ENCODE measurements at regions of chr3 and their contacts with region 1.

Region 1: GRCh38 chr3:170869645-170870593 is at the start of gene RPL22L1:
- DNase-seq: peak; percentile 79 to 99 (median 85)
- ATAC-seq: peak; percentile 90
- H3K4me3 ChIP-seq: peak within 1 kb of the TSS; percentile 66
- H3K27ac ChIP-seq: peak within 1 kb of the TSS; percentile 96
- H3K4me1 ChIP-seq: peaks cover 3 to 14% of the 10 kb centered on the region in 2 experiments; a peak in 3 of 5 replicates
- H3K27me3 ChIP-seq: no peaks in the 10 kb centered on the region
- CTCF ChIP-seq: peak in 2 of 3 experiments; percentile 26 to 31; a peak in 1 of 6 replicates
- EP300 ChIP-seq: peak; percentile 4; the same call in 1 of the 2 replicates
- POLR2A ChIP-seq: peak; percentile 100
- RAD21 ChIP-seq: peak; percentile 6 to 11; a peak in 1 of 4 replicates
- polyA plus RNA-seq, gene RPL22L1: 108 to 111 TPM

Region 2: DNA sequence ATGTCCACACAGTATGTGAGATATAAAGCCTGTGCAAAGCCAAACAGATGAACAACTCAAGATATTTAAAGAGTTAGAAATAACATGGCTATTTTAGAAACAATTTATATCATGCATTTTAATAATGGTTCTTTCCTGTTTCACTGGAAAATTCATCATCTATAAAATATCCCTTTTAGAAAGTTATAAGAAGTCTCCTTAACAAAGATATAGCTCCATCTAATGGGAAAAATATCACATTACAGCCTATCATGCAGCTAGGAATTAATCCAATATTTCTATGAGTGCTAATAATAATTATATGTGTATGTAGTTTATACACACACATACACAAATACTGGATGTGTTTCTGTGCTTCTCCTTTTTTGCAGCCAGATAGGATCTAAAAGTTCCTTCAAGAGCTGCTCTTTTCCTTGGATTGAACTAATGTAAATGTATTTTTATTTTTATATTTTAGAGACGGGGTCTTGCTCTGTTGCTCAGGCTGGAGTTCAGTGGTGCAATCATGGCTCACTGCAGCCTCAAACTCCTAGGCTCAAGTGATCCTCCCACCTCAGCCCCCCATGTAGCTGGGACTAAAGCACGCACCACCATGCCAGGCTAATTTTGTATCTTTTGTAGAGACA is 21.5 kb before region 1 on chr3:
- CTCF ChIA-PET with region 1: no interaction called
- POLR2A ChIA-PET with region 1: interaction called, 43 read pairs
- in situ Hi-C with region 1: no loop called
- intact Hi-C with region 1: no loop called
- DNase-seq: peak in 1 of 4 experiments; percentile 19
- ATAC-seq: 0 out of 3 replicates have a peak, but pooled peaks have one; percentile 42
- H3K4me3 ChIP-seq: no peak overlapping the region
- H3K27ac ChIP-seq: no peak overlapping the region
- H3K4me1 ChIP-seq: no peaks in the 10 kb centered on the region
- H3K27me3 ChIP-seq: no peaks in the 10 kb centered on the region; a peak in 1 of 5 replicates
- CTCF ChIP-seq: peak in 1 of 3 experiments; percentile 68; a peak in 4 of 6 replicates
- EP300 ChIP-seq: no peak
- POLR2A ChIP-seq: no peak
- RAD21 ChIP-seq: peak; percentile 77 to 83

Region 3: GRCh38 chr3:170889132-170889531 is 19.2 kb after region 1 on chr3:
- CTCF ChIA-PET with region 1: no interaction called
- POLR2A ChIA-PET with region 1: interaction called, 17 read pairs
- in situ Hi-C with region 1: no loop called
- intact Hi-C with region 1: no loop called
- DNase-seq: no peak
- ATAC-seq: no peak
- H3K4me3 ChIP-seq: no peak overlapping the region
- H3K27ac ChIP-seq: no peak overlapping the region
- H3K4me1 ChIP-seq: no peaks in the 10 kb centered on the region
- H3K27me3 ChIP-seq: no peaks in the 10 kb centered on the region
- CTCF ChIP-seq: no peak
- EP300 ChIP-seq: no peak
- POLR2A ChIP-seq: no peak
- RAD21 ChIP-seq: no peak

Region 4: DNA sequence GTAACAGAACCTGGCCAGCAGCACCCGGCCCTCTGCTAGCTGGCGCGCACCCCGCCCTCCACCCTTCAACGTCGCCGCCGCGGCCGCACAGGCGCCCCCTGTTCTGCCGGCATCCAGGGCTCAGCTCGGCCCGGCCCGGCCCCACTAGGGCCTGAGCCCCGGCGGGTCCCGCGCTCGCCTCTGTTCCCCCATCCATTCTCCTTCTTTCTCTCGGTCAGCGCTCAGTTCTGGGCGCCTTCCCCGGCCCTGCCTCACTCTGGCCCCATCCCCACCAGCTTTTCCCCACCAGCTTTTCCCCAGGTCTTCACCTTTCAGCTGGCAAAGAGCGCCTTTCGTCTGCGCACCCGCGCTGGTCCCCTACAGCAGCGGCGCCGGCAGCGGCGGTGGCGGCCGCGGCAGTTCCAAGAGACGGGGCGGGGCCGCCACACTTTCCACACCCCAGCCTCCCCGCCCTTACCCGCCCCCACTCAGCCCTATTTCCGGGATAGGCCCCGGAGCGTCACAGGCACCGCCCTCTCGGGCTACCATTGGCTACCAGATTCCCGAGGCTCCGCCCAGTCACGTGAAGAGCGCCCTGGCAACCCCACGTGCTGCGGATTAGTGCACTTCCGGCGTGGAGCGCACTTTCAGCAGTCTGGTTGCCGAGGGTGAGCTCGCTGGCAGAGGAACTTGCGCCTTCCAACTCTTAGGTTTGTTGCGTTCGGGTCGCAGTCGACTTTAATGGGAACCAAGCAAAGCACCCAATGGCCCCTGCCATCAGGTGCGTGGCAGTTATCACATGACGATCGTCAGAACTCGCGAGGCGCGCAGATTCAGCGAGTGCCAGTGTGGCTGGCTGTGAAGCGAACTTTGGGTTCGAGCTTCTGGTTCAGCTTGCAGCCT is 38.6 kb after region 1 on chr3 and contains the start of gene EIF5A2:
- CTCF ChIA-PET with region 1: no interaction called
- POLR2A ChIA-PET with region 1: interaction called, 7 read pairs
- in situ Hi-C with region 1: no loop called
- intact Hi-C with region 1: loop called (anchors 1 kb)
- DNase-seq: peak; percentile 97 to 99 (median 99)
- ATAC-seq: peak; percentile 97
- H3K4me3 ChIP-seq: peak within 1 kb of the TSS; percentile 77
- H3K27ac ChIP-seq: peak within 1 kb of the TSS; percentile 84
- H3K4me1 ChIP-seq: peaks cover 2 to 14% of the 10 kb centered on the region in 2 experiments; a peak in 3 of 5 replicates
- H3K27me3 ChIP-seq: no peaks in the 10 kb centered on the region
- CTCF ChIP-seq: no peak
- EP300 ChIP-seq: no peak
- POLR2A ChIP-seq: peak; percentile 85
- RAD21 ChIP-seq: no peak
- polyA plus RNA-seq, gene EIF5A2: 17.9 to 18.3 TPM

Region 5: GRCh38 chr3:170953229-170953628 is 83.3 kb after region 1 on chr3:
- CTCF ChIA-PET with region 1: no interaction called
- POLR2A ChIA-PET with region 1: no interaction called
- in situ Hi-C with region 1: no loop called
- intact Hi-C with region 1: loop called (anchors 10 kb)
- DNase-seq: peak in 2 of 4 experiments; percentile 22 to 54
- ATAC-seq: peak; percentile 86
- H3K4me3 ChIP-seq: peak overlapping the region; percentile 17; the same call in 1 of the 2 replicates
- H3K27ac ChIP-seq: no peak overlapping the region; the same call in 2 of the 3 replicates
- H3K4me1 ChIP-seq: peaks cover 0 to 3% of the 10 kb centered on the region in 2 experiments; a peak in 1 of 5 replicates
- H3K27me3 ChIP-seq: peaks cover 0 to 8% of the 10 kb centered on the region in 2 experiments; a peak in 2 of 5 replicates
- CTCF ChIP-seq: no peak
- EP300 ChIP-seq: no peak
- POLR2A ChIP-seq: no peak
- RAD21 ChIP-seq: no peak